ENCODE measurements at regions of chr1 and their contacts with region 1.

Region 1: DNA sequence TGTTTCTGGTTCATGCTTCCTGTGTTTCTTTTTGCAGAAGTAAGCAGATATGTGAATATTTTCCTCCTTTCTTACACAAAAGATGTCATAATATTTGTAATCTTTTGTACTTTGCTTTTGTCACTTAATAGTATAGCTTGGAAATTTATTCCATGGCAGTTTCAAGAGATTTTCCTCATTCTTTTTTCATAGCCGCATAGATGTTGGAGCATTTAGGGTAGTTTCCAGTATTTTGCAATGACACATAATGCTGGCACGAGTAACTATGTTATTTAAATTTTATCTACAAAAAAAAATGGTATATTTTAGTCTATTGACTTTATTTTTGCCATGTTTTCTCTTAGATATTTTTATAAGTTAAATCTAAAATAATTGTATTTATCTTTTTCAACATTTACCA is 40.7 kb downstream of the AGO3 start:
- DNase-seq: no peak
- H3K4me3 Mint-ChIP-seq: no peak overlapping the region
- H3K27ac Mint-ChIP-seq: no peak overlapping the region
- H3K4me1 Mint-ChIP-seq: peaks cover 3% of the 10 kb centered on the region
- H3K27me3 Mint-ChIP-seq: no peaks in the 10 kb centered on the region

Region 2: GRCh38 chr1:36008546-36009197 is 37.1 kb after region 1 on chr1:
- intact Hi-C with region 1: no loop called
- DNase-seq: no peak
- H3K4me3 Mint-ChIP-seq: no peak overlapping the region
- H3K27ac Mint-ChIP-seq: no peak overlapping the region
- H3K4me1 Mint-ChIP-seq: peaks cover 4% of the 10 kb centered on the region
- H3K27me3 Mint-ChIP-seq: no peaks in the 10 kb centered on the region

Region 3: DNA sequence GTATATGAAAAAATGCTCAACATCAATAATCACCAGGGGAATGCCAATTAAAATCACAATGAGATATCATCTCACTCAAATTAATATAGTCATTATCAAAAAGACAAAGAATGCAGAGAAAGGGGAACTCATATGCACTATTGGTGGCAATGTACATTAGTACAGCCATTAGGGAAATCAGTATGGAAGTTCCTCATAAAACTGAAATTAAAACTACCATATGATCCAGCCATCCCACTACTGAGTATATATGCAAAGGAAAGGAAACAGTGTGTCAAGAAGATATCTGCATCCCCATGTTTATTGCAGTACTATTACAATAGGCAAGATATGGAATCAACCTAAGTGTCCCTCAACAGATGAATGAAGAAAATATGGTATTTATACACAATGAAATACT is 80.2 kb after region 1 on chr1:
- intact Hi-C with region 1: loop called (anchors 2 kb)
- DNase-seq: no peak
- H3K4me3 Mint-ChIP-seq: no peak overlapping the region
- H3K27ac Mint-ChIP-seq: no peak overlapping the region
- H3K4me1 Mint-ChIP-seq: no peaks in the 10 kb centered on the region
- H3K27me3 Mint-ChIP-seq: no peaks in the 10 kb centered on the region

Measured in activated CD4-positive, alpha-beta T cell treated with anti-CD3 and anti-CD28 coated beads, Interleukin-2, amount 10 ng/mL, durations not matched to agents 24 days and 14 days (primary cell).